Transverse colon (tissue), 4 donors: ENCODE measurements at regions of chr9 and their contacts with region 1.

Region 1: GRCh38 chr9:83937911-83938323 is 16.7 kb upstream of the KIF27 start:
- DNase-seq: no peak
- H3K4me3 ChIP-seq: no peak overlapping the region
- H3K27ac ChIP-seq: no peak overlapping the region
- H3K4me1 ChIP-seq: peaks cover 0 to 5% (median 4%) of the 10 kb centered on the region in 4 donors
- H3K27me3 ChIP-seq: no peaks in the 10 kb centered on the region
- CTCF ChIP-seq: peak; percentile 62 to 76 (median 70)
- EP300 ChIP-seq: no peak
- POLR2A ChIP-seq: no peak

Region 2: DNA sequence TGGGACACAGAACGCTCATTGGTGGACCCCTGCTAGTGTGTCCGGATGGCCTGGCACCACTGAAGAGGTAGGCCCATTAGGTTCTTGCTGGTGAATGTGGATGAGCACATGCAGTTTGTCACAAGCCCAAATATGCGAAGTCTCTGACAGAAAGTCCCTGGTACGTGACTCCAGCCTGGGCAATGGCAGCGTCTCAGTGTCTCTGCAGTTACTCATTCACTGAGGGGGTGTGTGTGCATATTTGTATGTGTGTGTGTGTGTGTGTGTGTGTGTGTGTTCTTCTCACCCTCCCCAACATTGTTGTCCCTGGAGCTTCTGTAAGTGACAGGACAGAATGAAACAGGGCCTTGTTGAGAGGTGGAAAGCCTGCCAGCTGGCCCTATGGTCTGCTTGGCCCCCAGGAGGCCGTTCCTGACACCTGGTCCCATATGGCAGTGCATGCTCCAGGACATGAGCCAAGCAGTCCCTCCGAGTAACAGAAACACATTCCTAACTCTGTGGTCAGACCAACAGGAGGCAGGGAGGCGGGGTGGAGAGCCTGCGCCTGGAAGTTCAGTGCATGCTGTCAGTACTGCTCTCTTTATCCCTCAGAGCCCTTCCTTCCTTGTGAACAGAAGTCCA is 232.7 kb after region 1 on chr9:
- in situ Hi-C with region 1: loop called (anchors 10 to 25 kb)
- intact Hi-C with region 1: loop called (anchors 5 kb)
- DNase-seq: peak; percentile 73
- H3K4me3 ChIP-seq: no peak overlapping the region
- H3K27ac ChIP-seq: peak overlapping the region in 3 of 4 donors; percentile 3 to 42 (median 31)
- H3K4me1 ChIP-seq: peaks cover 0 to 10% (median 2%) of the 10 kb centered on the region in 4 donors
- H3K27me3 ChIP-seq: no peaks in the 10 kb centered on the region
- CTCF ChIP-seq: peak in 1 of 5 experiments; percentile 34
- EP300 ChIP-seq: no peak
- POLR2A ChIP-seq: no peak

Region 3: DNA sequence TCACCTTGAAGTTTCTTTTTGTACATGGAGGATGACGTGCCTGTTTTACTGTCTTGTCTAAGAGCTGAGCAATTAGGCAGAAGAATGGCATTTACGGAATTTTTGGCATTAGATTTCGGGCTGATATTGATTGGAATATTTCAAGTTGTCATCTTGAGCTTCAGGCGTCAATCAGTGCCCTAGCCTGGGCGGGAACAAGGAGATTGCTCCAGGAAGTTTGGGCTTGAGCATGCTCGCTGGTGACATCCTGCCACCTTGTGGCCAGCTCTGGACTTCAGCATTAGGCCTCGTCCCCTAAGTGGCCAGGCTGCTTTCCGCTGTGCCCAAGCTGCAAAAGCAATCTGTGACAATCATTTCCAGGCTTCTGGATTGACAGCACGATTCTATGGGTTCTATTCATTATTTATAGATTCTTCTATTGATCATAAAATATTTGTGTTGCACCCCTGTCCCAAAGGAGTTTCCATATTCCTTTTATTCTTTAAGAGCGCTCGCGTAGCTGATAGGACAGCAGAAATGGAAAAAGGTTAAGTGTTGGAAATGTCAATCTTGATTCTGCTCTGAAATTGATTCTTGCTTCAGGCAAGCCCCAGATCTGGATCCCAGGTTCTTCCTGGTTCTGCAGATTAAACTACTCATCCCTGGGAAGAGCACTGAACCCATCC is 323.3 kb after region 1 on chr9:
- in situ Hi-C with region 1: loop called (anchors 5 to 10 kb)
- intact Hi-C with region 1: loop called (anchors 5 kb)
- DNase-seq: peak; percentile 87
- H3K4me3 ChIP-seq: peak overlapping the region in 1 of 4 donors; percentile 27
- H3K27ac ChIP-seq: no peak overlapping the region
- H3K4me1 ChIP-seq: peaks cover 0 to 4% (median 0%) of the 10 kb centered on the region in 4 donors
- H3K27me3 ChIP-seq: no peaks in the 10 kb centered on the region
- CTCF ChIP-seq: peak; percentile 84 to 89 (median 88)
- EP300 ChIP-seq: no peak
- POLR2A ChIP-seq: no peak

Region 4: GRCh38 chr9:84315278-84315877 is 377.5 kb after region 1 on chr9:
- in situ Hi-C with region 1: loop called in 2 of 4 experiments (anchors 5 to 10 kb)
- intact Hi-C with region 1: no loop called
- DNase-seq: peak; percentile 63
- H3K4me3 ChIP-seq: no peak overlapping the region
- H3K27ac ChIP-seq: no peak overlapping the region
- H3K4me1 ChIP-seq: peaks cover 0 to 7% (median 2%) of the 10 kb centered on the region in 4 donors
- H3K27me3 ChIP-seq: no peaks in the 10 kb centered on the region
- CTCF ChIP-seq: peak; percentile 71 to 79 (median 78)
- EP300 ChIP-seq: no peak
- POLR2A ChIP-seq: no peak

Region 5: GRCh38 chr9:84322828-84323227 is 384.9 kb after region 1 on chr9:
- in situ Hi-C with region 1: loop called in 2 of 4 experiments (anchors 5 to 10 kb)
- intact Hi-C with region 1: no loop called
- DNase-seq: no peak
- H3K4me3 ChIP-seq: no peak overlapping the region
- H3K27ac ChIP-seq: no peak overlapping the region
- H3K4me1 ChIP-seq: peaks cover 0 to 9% (median 0%) of the 10 kb centered on the region in 4 donors
- H3K27me3 ChIP-seq: no peaks in the 10 kb centered on the region
- CTCF ChIP-seq: no peak
- EP300 ChIP-seq: no peak
- POLR2A ChIP-seq: no peak

Region 6: DNA sequence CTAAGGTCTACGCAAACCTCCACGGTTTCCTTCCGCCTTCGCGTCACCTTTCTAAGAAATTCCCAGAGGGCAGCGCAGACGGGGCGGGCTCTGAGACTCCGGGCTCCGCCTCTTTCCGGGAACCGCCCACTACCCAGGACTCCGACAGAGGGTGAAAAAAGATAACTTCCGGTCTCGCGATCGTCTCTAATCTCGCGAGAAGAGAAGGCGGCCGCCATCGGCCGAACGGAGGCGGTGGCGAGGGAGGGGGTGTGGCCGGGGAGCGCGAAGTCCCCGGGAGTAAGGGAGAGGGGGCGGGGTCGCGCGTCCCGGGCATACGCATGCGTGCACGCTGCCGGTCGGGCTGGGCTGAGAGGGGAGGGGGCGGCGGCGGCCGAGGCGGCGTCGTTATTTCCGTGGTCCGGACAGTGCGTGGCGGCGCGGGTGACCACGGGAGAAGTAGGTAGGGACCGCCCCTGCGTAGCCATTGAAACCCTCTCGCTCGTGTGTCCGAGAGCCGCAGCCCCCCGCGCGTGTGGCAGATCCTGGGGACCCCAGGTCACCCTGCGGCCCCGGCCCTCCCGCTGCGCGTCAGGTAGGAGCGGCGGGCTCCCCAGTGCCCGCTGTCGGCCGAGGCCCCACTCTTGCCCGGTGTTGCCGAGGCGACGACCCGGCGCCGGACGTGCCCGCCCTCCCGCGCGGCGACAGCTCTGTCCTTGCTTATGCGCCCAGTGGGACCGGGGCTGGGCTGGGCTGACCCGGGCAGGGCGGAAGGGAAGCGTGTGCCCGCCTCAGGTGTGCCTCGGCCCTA is 2003.1 kb after region 1 on chr9 and contains the start of gene NAA35:
- in situ Hi-C with region 1: no loop called
- intact Hi-C with region 1: no loop called
- DNase-seq: peak; percentile 99
- H3K4me3 ChIP-seq: peak within 1 kb of the TSS; percentile 86 to 98 (median 90)
- H3K27ac ChIP-seq: peak within 1 kb of the TSS; percentile 93 to 99 (median 98)
- H3K4me1 ChIP-seq: peaks cover 14 to 41% (median 22%) of the 10 kb centered on the region in 4 donors
- H3K27me3 ChIP-seq: no peaks in the 10 kb centered on the region
- CTCF ChIP-seq: no peak
- EP300 ChIP-seq: no peak
- POLR2A ChIP-seq: no peak
- total RNA-seq, gene NAA35: 24.7 to 51.5 (median 34.5) TPM